Mammary epithelial cell (primary cell): ENCODE measurements at regions of chr16 and their contacts with region 1.

Region 1: GRCh38 chr16:46673320-46674013 is 15.5 kb downstream of the VPS35 start:
- DNase-seq: peak; percentile 52
- H3K4me3 ChIP-seq: no peak overlapping the region
- H3K27ac ChIP-seq: no peak overlapping the region
- H3K4me1 ChIP-seq: peaks cover 17% of the 10 kb centered on the region
- H3K27me3 ChIP-seq: no peaks in the 10 kb centered on the region
- CTCF ChIP-seq: peak; percentile 99

Region 2: GRCh38 chr16:46689365-46690280 is 16.2 kb after region 1 on chr16 and contains the start of gene ORC6:
- CTCF ChIA-PET with region 1: interaction called, 14 read pairs
- dilution Hi-C with region 1: no loop called
- in situ Hi-C with region 1: no loop called
- intact Hi-C with region 1: loop called (anchors 1 kb)
- DNase-seq: peak; percentile 95
- H3K4me3 ChIP-seq: peak within 1 kb of the TSS; percentile 81 to 98 (median 90)
- H3K27ac ChIP-seq: peak within 1 kb of the TSS; percentile 80
- H3K4me1 ChIP-seq: peaks cover 21% of the 10 kb centered on the region
- H3K27me3 ChIP-seq: no peaks in the 10 kb centered on the region
- CTCF ChIP-seq: peak; percentile 48 to 77
- total RNA-seq, gene ORC6: 2.8 to 28.2 TPM

Region 3: DNA sequence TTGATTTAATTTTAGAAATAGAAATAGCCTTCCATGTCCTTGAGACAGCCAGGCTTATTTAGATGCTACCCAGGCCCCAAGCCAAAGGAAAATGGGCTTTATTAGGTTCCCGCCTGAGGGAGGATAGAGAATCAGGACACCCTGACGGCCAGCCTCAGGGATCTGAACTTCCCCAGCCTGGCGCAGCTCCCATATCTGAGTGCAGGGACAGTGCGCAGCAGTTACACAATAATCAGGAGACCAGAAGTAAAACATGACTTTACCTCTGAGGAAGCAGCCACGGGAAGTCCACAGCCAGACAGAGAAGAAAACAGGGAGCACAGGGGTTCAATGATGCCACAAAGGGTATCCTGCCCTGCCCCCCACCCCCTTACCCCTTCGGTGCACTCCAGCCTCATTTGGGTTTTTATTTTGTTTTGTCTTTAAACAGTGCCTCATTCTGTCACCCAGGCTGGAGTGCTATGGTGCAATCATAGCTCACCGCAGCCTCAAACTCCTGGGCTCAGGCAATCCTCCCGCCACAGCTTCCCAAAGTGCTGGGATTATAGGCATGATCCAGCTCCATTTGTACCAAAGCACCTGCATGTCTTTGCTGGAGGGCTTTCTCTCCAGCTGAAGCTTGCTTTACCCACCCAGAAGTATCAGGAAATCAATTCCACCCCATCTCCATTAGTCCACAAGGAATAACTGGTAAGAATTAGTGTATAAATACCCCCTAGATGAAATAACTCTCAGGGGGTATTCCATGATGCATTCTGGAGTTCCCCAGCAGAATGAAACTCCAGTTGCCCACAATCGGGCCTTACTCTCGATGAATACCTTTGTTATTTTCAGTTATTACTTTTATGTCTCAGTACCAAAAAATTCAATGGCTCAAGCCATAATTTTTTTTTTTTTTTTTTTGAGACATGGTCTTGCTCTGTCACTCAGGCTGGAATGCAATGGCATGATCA is 37.9 kb after region 1 on chr16:
- CTCF ChIA-PET with region 1: no interaction called
- dilution Hi-C with region 1: no loop called
- in situ Hi-C with region 1: no loop called
- intact Hi-C with region 1: no loop called
- DNase-seq: no peak
- H3K4me3 ChIP-seq: no peak overlapping the region
- H3K27ac ChIP-seq: no peak overlapping the region
- H3K4me1 ChIP-seq: no peaks in the 10 kb centered on the region
- H3K27me3 ChIP-seq: no peaks in the 10 kb centered on the region
- CTCF ChIP-seq: no peak

Region 4: GRCh38 chr16:46728806-46729205 is 55.3 kb after region 1 on chr16:
- CTCF ChIA-PET with region 1: no interaction called
- dilution Hi-C with region 1: no loop called
- in situ Hi-C with region 1: no loop called
- intact Hi-C with region 1: no loop called
- DNase-seq: no peak
- H3K4me3 ChIP-seq: no peak overlapping the region
- H3K27ac ChIP-seq: no peak overlapping the region
- H3K4me1 ChIP-seq: no peaks in the 10 kb centered on the region
- H3K27me3 ChIP-seq: no peaks in the 10 kb centered on the region
- CTCF ChIP-seq: no peak

Region 5: GRCh38 chr16:46747762-46748651 is 74.5 kb after region 1 on chr16 and contains the start of gene MYLK3:
- CTCF ChIA-PET with region 1: interaction called, 10 read pairs
- dilution Hi-C with region 1: no loop called
- in situ Hi-C with region 1: no loop called
- intact Hi-C with region 1: no loop called
- DNase-seq: no peak
- H3K4me3 ChIP-seq: no peak within 1 kb of the TSS
- H3K27ac ChIP-seq: no peak within 1 kb of the TSS
- H3K4me1 ChIP-seq: no peaks in the 10 kb centered on the region
- H3K27me3 ChIP-seq: no peaks in the 10 kb centered on the region
- CTCF ChIP-seq: no peak
- total RNA-seq, gene MYLK3: 0.17 to 0.40 TPM

Region 6: DNA sequence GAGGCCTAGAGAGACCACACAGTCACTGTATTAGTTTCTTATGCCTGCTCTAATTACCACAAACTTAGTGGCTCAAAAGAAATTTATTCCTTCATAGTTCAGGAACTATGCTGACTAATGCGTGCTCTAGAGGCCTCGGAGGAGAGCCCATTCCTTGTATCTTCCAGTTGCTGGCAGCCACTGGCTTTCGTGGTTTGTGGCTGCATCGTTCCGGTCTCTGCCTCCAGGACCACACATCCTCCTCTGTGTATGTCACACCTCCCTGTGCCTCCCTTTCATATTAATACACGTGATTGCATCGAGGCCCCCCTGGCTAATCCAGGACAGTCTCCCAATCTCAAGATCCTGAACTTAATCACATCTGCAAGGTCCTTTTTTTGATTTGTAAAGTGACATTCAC is 91.6 kb after region 1 on chr16:
- CTCF ChIA-PET with region 1: no interaction called
- dilution Hi-C with region 1: no loop called
- in situ Hi-C with region 1: no loop called
- intact Hi-C with region 1: no loop called
- DNase-seq: peak; percentile 61
- H3K4me3 ChIP-seq: no peak overlapping the region
- H3K27ac ChIP-seq: no peak overlapping the region
- H3K4me1 ChIP-seq: peaks cover 12% of the 10 kb centered on the region
- H3K27me3 ChIP-seq: no peaks in the 10 kb centered on the region
- CTCF ChIP-seq: no peak

Region 7: GRCh38 chr16:46789499-46790414 is 116.3 kb after region 1 on chr16:
- CTCF ChIA-PET with region 1: no interaction called
- dilution Hi-C with region 1: no loop called
- in situ Hi-C with region 1: loop called (anchors 10 kb)
- intact Hi-C with region 1: no loop called
- DNase-seq: peak; percentile 42
- H3K4me3 ChIP-seq: peak overlapping the region; percentile 41 to 82 (median 64)
- H3K27ac ChIP-seq: no peak overlapping the region
- H3K4me1 ChIP-seq: peaks cover 9% of the 10 kb centered on the region
- H3K27me3 ChIP-seq: no peaks in the 10 kb centered on the region
- CTCF ChIP-seq: no peak

Region 8: DNA sequence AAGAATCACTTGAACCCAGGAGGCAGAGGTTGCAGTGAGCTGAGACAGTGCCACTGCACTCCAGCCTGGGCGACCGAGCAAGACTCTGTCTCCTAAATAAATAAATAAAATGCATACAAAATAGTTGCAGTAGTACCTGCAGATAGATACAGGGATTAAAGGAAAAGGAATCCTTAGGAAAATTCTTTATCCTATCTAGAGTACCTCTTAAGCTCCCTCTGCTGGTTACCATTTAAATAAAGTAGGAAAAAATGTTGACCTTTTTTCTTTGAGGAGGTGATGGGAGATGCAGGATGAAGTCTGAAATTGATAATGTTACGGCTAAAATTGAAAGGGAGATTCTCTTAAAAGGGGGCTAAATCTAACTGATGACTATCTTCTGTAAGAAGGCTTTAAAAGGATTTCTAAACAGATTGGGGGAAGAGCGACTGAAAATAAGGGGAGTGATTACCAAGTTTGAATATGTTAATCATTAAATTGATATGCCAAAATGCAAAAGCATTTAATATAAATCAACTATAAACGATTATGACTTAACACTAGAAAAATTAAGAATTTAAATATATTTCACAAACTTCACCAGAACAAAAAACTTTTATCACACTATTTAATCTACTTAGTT is 128.1 kb after region 1 on chr16:
- CTCF ChIA-PET with region 1: interaction called, 9 read pairs
- dilution Hi-C with region 1: no loop called
- in situ Hi-C with region 1: loop called (anchors 10 kb)
- intact Hi-C with region 1: loop called (anchors 1 kb)
- DNase-seq: no peak
- H3K4me3 ChIP-seq: no peak overlapping the region
- H3K27ac ChIP-seq: no peak overlapping the region
- H3K4me1 ChIP-seq: no peaks in the 10 kb centered on the region
- H3K27me3 ChIP-seq: no peaks in the 10 kb centered on the region
- CTCF ChIP-seq: peak; percentile 20 to 51

Region 9: GRCh38 chr16:46853713-46854443 is 180.4 kb after region 1 on chr16:
- CTCF ChIA-PET with region 1: no interaction called
- dilution Hi-C with region 1: no loop called
- in situ Hi-C with region 1: no loop called
- intact Hi-C with region 1: loop called (anchors 5 kb)
- DNase-seq: peak; percentile 49
- H3K4me3 ChIP-seq: no peak overlapping the region
- H3K27ac ChIP-seq: no peak overlapping the region
- H3K4me1 ChIP-seq: no peaks in the 10 kb centered on the region
- H3K27me3 ChIP-seq: no peaks in the 10 kb centered on the region
- CTCF ChIP-seq: peak; percentile 88 to 94

Region 10: DNA sequence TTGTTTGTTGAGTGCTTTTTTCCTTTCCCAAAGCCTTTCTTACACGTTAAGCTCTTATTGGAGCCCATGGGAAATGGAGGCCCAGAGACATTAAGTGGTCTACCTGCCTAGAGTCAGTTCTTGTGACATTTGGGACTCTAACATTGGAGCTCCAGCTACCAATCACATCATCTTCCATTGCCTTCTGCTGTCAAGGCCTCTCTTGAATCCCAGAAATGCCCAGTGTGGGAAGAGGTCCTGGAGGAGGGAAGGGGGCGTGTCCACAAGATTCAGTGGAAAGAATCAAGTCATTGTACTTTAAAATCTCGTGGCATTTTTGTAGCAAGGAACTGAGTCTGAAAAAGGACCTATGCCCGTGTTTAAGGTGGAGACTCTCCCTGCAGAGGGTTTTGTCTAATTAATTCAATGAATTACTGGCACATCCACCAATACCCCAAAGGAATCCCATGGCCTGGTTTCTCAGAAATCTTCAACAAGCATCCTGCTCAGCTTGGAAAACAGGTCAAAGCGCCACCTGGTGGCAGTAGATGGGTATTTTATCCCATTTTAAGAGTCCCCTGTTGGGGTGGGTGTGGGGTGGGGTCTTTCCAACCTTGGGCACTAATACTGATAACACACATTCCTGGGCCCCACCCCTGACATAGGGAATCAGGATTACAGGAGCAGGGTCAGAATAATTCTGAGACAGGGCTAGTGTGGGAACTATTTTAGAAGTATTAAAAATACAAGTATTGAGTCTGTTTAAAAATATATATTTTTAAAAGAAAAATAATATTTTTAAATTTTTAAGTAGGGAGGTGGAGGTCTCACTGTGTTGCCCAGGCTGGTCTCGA is 235.3 kb after region 1 on chr16:
- CTCF ChIA-PET with region 1: no interaction called
- dilution Hi-C with region 1: no loop called
- in situ Hi-C with region 1: no loop called
- intact Hi-C with region 1: loop called (anchors 1 kb)
- DNase-seq: peak; percentile 12
- H3K4me3 ChIP-seq: no peak overlapping the region
- H3K27ac ChIP-seq: no peak overlapping the region
- H3K4me1 ChIP-seq: no peaks in the 10 kb centered on the region
- H3K27me3 ChIP-seq: no peaks in the 10 kb centered on the region
- CTCF ChIP-seq: peak; percentile 38 to 71